HepG2 (cell line): ENCODE measurements at regions of chr4 and their contacts with region 1.

Region 1: GRCh38 chr4:62591756-62592155 is 1391.6 kb downstream of the ADGRL3 start:
- DNase-seq: no peak
- ATAC-seq: no peak
- H3K4me3 ChIP-seq: no peak overlapping the region
- H3K27ac ChIP-seq: no peak overlapping the region
- H3K4me1 ChIP-seq: no peaks in the 10 kb centered on the region
- H3K27me3 ChIP-seq: no peaks in the 10 kb centered on the region
- CTCF ChIP-seq: no peak
- EP300 ChIP-seq: no peak
- POLR2A ChIP-seq: no peak
- RAD21 ChIP-seq: no peak

Region 2: DNA sequence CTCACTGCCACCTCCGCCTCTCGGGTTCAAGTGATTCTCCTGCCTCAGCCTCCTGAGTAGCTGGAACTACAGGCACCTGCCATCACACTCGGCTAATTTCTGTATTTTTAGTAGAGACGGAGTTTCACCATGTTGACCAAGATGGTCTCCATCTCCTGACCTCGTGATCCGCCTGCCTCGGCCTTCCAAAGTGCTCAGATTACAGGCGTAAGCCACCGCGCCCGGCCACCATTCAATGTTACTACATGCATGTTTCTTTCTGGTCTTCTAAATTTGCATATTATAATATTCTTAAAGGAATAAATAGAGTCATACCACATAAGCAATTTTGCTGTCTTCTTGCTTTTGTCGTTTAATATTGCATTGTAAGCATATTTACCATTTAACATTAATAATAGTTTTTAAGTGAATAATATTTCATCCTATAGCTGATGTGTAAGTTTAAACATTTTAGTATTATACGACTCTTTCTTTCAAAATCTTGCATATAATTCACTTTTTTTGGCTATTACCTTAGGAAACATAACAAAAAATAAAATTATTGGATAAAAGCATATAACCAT is 121.3 kb before region 1 on chr4:
- CTCF ChIA-PET with region 1: no interaction called
- POLR2A ChIA-PET with region 1: no interaction called
- in situ Hi-C with region 1: no loop called
- intact Hi-C with region 1: no loop called
- DNase-seq: no peak
- ATAC-seq: no peak
- H3K4me3 ChIP-seq: no peak overlapping the region
- H3K27ac ChIP-seq: no peak overlapping the region
- H3K4me1 ChIP-seq: no peaks in the 10 kb centered on the region
- H3K27me3 ChIP-seq: no peaks in the 10 kb centered on the region
- CTCF ChIP-seq: no peak
- EP300 ChIP-seq: no peak
- POLR2A ChIP-seq: no peak
- RAD21 ChIP-seq: no peak

Region 3: DNA sequence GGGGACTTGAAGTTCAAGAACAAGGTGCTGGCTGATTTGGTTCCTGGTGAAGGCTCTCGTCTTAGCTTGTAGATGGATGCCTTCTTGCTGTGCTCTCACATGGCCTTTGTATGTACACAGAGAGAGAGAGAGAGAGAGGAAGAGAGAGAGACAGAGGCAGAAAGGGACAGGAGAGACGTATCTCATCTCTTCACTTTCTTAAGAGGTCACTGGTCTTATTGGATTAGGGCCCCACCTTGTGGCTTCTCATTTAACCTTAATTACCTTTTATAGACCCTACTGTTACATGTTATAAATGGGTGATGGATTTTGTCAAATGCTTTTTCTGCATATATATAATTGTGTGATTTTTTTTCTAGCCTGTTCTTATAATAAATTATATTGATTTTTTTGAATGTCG is 52.6 kb after region 1 on chr4:
- CTCF ChIA-PET with region 1: interaction called, 4 read pairs
- POLR2A ChIA-PET with region 1: no interaction called
- in situ Hi-C with region 1: no loop called
- intact Hi-C with region 1: loop called (anchors 1 kb)
- DNase-seq: peak; percentile 15
- ATAC-seq: peak; percentile 44; the same call in 2 of the 3 replicates
- H3K4me3 ChIP-seq: no peak overlapping the region
- H3K27ac ChIP-seq: no peak overlapping the region
- H3K4me1 ChIP-seq: no peaks in the 10 kb centered on the region
- H3K27me3 ChIP-seq: no peaks in the 10 kb centered on the region
- CTCF ChIP-seq: peak; percentile 46
- EP300 ChIP-seq: no peak
- POLR2A ChIP-seq: no peak
- RAD21 ChIP-seq: no peak